Gastrocnemius medialis (tissue), 4 donors: ENCODE measurements at regions of chr17 and their contacts with region 1.

Region 1: GRCh38 chr17:21511363-21512198 is 135.4 kb downstream of the KCNJ12 start:
- DNase-seq: peak; percentile 71 to 84
- ATAC-seq: peak; percentile 95 to 97
- H3K4me3 ChIP-seq: peak overlapping the region; percentile 65 to 82 (median 68)
- H3K27ac ChIP-seq: peak overlapping the region; percentile 68 to 80 (median 74)
- H3K4me1 ChIP-seq: peaks cover 4 to 16% of the 10 kb centered on the region in 2 donors
- H3K27me3 ChIP-seq: no peaks in the 10 kb centered on the region
- CTCF ChIP-seq: peak; percentile 61 to 90 (median 78)
- POLR2A ChIP-seq: no peak

Region 2: DNA sequence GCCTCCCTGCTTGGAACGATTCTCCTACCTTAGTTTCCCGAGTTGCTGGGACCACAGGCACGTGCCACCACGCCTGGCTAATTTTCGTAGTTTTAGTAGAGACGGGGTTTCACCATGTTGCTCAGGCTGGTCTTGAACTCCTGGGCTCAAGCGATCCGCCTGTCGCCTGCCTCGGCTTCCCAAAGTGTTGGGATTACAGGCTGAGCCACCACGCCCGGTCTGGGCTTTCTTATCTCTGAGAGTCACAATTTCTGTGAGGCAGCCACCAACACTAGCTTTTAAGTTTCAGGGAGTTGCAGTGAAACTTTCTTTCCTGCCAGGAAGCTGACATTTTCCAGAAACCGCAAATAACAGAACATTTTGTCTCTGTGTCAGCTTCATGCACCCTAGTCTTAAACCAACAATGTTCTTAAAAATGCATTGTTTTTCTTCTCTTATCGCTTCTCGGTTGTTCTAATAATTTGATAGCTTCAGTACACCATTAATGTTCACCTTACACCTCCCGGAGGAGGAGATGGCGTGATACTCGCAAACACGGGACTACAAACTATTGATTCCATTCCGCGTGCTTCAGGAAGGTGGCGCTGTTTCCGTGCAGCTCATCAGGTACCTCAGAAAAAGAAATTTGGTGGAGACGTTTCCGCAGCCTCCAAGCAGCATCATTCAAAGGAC is 392.2 kb before region 1 on chr17:
- in situ Hi-C with region 1: loop called in 3 of 4 experiments (anchors 10 to 25 kb)
- intact Hi-C with region 1: no loop called
- DNase-seq: peak; percentile 38 to 55
- ATAC-seq: peak; percentile 84 to 93
- H3K4me3 ChIP-seq: no peak overlapping the region
- H3K27ac ChIP-seq: peak overlapping the region in 3 of 4 donors; percentile 9 to 37 (median 18)
- H3K4me1 ChIP-seq: peaks cover 0 to 5% of the 10 kb centered on the region in 2 donors
- H3K27me3 ChIP-seq: no peaks in the 10 kb centered on the region
- CTCF ChIP-seq: peak; percentile 54 to 90 (median 67)
- POLR2A ChIP-seq: no peak

Region 3: GRCh38 chr17:21304091-21304490 is 207.5 kb before region 1 on chr17:
- in situ Hi-C with region 1: loop called in 1 of 4 experiments (anchors 25 kb)
- intact Hi-C with region 1: no loop called
- DNase-seq: peak in 1 of 2 donors; percentile 13
- ATAC-seq: no peak
- H3K4me3 ChIP-seq: no peak overlapping the region
- H3K27ac ChIP-seq: no peak overlapping the region
- H3K4me1 ChIP-seq: no peaks in the 10 kb centered on the region
- H3K27me3 ChIP-seq: no peaks in the 10 kb centered on the region
- CTCF ChIP-seq: no peak
- POLR2A ChIP-seq: no peak

Region 4: DNA sequence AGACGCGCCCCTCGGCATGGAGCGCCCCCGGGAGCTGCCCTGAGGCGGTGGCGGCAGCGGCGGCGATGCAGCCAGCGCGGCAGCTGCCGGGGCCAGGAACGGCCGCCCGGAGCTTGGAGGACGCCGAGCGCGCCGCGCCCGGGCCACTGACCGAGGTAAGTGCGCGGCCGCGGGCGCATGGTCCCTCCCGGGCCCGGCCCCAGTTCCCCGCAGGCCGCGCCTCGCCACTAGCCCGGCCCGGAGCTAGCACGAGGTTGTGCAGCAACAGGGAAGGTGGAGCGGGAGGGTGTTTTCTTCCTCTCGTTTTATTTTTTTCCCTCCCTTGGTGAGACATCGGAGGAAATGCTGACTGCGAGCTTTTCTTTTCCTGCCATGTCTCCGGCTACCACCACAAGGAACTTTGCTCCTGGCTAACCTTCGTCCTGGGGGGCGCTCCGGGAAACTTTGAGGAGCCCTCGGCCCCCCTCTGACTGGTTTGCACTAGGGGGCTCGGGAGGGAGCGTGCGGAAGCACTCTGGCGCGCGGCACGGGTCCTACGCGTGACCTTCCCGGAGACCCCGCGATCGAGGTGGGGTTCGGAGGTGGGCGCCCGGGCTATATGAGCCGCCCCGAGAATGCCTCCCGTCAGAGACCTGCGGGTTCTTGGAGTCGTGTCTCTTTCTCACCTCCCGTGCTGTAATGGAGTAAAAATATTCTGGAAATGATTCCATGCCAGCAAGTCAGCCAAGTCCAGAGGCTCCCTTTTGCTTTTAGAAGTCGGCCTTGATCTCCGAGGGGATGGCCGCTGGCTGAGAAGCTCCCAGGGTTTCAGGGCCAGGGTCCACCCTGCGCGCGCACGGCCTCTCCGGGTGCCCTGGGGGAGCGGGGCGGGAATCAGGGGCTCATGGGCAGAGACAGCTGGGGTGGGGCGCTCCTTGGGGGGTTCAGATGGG is 134.6 kb before region 1 on chr17:
- in situ Hi-C with region 1: no loop called
- intact Hi-C with region 1: loop called (anchors 5 kb)
- DNase-seq: peak in 1 of 2 donors; percentile 36
- ATAC-seq: peak; percentile 44 to 45
- H3K4me3 ChIP-seq: peak overlapping the region; percentile 59 to 68 (median 62)
- H3K27ac ChIP-seq: peak overlapping the region; percentile 88 to 93 (median 89)
- H3K4me1 ChIP-seq: peaks cover 28 to 44% of the 10 kb centered on the region in 2 donors
- H3K27me3 ChIP-seq: no peaks in the 10 kb centered on the region
- CTCF ChIP-seq: no peak
- POLR2A ChIP-seq: no peak

Region 5: GRCh38 chr17:21463779-21464407 is 47.7 kb before region 1 on chr17:
- in situ Hi-C with region 1: loop called in 2 of 4 experiments (anchors 5 kb)
- intact Hi-C with region 1: no loop called
- DNase-seq: no peak
- ATAC-seq: no peak
- H3K4me3 ChIP-seq: peak overlapping the region in 1 of 4 donors; percentile 9
- H3K27ac ChIP-seq: no peak overlapping the region
- H3K4me1 ChIP-seq: no peaks in the 10 kb centered on the region
- H3K27me3 ChIP-seq: peaks cover 0 to 6% (median 5%) of the 10 kb centered on the region in 3 donors
- CTCF ChIP-seq: no peak
- POLR2A ChIP-seq: no peak